Head of caudate nucleus (tissue), 42 donors: ENCODE measurements at regions of chr3 and their contacts with region 1.

Region 1: DNA sequence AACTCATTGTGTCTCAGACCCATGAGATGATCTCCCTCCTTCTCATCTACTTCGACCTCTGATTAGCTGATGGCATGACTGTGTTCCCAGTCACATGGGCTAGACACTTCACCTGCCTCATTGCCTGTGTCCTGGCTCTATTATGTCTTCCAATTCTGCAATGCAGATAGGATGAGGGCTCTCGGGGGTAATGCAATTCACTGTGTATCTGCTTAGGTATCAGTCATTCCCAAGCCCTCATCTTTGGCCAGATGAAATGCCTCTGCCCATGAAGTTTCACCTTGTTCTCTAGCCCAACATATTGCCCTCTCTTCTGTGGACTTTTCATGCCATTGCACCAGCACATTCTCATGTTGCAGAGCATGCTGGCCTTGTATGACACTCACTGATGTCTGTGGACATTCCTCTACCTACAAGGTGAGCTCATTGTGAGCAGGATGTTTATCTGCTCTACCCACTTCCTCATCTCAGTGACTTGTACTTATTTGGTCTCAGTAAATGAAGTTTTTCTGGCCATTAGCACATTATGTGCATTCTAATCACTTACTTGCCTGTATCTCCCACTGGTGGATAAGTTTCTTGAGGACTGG is 32.3 kb downstream of the MOBP start:
- DNase-seq: no peak

Region 2: DNA sequence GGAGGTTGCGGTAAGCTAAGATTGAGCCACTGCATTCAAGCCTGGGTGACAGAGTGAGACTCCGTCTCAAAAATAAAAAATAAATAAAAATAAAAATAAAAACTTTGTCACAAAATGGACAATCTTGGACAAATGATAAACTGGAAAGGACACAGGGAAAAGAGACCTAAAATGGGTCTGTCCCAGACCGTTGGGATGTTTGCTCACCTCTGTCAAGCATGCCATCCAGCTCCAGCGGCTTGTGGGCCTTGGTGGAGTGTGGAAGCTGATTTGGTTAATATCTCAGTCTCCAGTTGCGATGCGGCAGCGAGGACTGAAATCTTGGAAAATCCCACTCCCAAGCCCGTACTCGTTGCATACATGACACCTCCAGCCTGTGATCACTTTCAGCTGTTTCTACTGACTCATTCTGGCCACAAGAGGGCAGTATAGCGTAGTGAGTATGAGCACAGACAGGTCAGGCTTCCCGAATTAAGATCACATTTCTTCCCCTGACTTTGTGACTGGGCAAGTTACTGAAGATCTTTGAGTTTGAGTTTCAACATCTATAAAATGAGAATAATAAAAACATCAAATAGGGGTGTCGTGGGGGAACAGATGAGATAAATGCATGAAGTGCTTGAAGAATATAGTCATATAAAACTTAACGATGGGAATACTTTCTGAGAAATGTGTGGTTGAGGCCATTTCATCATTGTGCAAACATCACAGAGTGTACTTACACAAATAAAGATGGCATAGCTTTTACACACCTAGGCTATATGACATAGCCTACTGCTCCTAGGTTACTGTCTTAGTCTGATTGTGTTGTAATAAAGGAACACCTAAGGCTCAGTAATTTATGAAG is 51.9 kb before region 1 on chr3:
- intact Hi-C with region 1: loop called (anchors 2 kb)
- DNase-seq: peak; percentile 8 to 96 (median 81)

Region 3: GRCh38 chr3:39592352-39593050 is 92.8 kb after region 1 on chr3:
- intact Hi-C with region 1: no loop called
- DNase-seq: no peak